Right cardiac atrium (tissue), 5 donors: ENCODE measurements at regions of chr16 and their contacts with region 1.

Region 1: GRCh38 chr16:26697807-26698206 is 368.9 kb upstream of the C16orf82 start:
- DNase-seq: no peak
- ATAC-seq: no peak
- H3K4me3 ChIP-seq: no peak overlapping the region
- H3K27ac ChIP-seq: no peak overlapping the region
- H3K4me1 ChIP-seq: no peaks in the 10 kb centered on the region
- H3K27me3 ChIP-seq: no peaks in the 10 kb centered on the region

Region 2: DNA sequence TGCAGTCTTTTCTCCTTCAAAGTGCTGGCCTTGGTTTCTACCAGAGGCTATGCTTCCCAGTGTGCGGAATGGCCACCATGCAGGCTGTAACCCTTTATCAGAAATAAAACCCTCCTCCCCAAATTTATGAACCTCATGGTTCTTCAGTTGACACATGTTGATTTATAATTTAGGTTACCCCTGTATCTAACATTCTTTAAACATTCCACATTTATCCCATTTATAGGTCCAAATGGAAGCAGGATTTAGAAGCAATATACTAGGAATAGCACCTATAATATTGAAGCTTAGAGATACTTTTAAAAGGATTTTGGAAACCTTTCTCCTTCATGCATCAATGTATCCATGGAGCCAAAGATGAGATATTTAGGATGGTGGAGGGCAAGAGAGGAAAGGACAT is 69.8 kb before region 1 on chr16:
- intact Hi-C with region 1: no loop called
- DNase-seq: no peak
- ATAC-seq: no peak
- H3K4me3 ChIP-seq: no peak overlapping the region
- H3K27ac ChIP-seq: no peak overlapping the region
- H3K4me1 ChIP-seq: no peaks in the 10 kb centered on the region
- H3K27me3 ChIP-seq: no peaks in the 10 kb centered on the region

Region 3: DNA sequence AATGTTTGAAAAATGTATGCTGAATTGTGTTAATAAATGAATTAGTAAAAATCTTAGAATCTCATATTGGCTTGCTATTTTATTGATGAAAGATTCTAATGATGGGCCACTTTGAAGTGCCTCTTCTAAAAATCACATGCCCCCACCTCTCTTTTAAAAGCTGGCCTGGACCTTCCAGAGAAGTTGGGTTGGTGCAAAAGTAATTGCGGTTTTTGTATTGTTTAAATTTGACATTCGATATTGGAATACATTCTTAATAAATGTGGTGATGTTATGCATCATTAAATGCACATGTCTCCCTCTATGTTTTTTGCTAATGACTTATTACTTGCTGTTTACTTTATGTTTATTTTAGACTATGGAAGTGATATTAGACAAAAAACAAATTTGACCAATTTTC is 54.4 kb after region 1 on chr16:
- intact Hi-C with region 1: loop called in 1 of 4 experiments (anchors 10 kb)
- DNase-seq: no peak
- ATAC-seq: no peak
- H3K4me3 ChIP-seq: no peak overlapping the region
- H3K27ac ChIP-seq: no peak overlapping the region
- H3K4me1 ChIP-seq: no peaks in the 10 kb centered on the region
- H3K27me3 ChIP-seq: no peaks in the 10 kb centered on the region